HepG2 (cell line): ENCODE measurements at regions of chr12 and their contacts with region 1.

Region 1: GRCh38 chr12:112012775-112013600 is at the starts of genes ERP29 and TMEM116:
- DNase-seq: peak; percentile 95
- ATAC-seq: peak; percentile 76
- H3K4me3 ChIP-seq: peak within 1 kb of the TSS; percentile 62 to 86 (median 72)
- H3K27ac ChIP-seq: peak within 1 kb of the TSS; percentile 91
- H3K4me1 ChIP-seq: peaks cover 55% of the 10 kb centered on the region
- H3K27me3 ChIP-seq: no peaks in the 10 kb centered on the region; a peak in 1 of 5 replicates
- CTCF ChIP-seq: peak; percentile 51; the same call in 1 of the 2 replicates
- EP300 ChIP-seq: no peak
- POLR2A ChIP-seq: peak; percentile 96 to 97
- RAD21 ChIP-seq: peak; percentile 42
- total RNA-seq, gene ERP29: 67.6 and 147 TPM in 2 replicates
- total RNA-seq, gene TMEM116: 11.5 and 14.0 TPM in 2 replicates

Region 2: DNA sequence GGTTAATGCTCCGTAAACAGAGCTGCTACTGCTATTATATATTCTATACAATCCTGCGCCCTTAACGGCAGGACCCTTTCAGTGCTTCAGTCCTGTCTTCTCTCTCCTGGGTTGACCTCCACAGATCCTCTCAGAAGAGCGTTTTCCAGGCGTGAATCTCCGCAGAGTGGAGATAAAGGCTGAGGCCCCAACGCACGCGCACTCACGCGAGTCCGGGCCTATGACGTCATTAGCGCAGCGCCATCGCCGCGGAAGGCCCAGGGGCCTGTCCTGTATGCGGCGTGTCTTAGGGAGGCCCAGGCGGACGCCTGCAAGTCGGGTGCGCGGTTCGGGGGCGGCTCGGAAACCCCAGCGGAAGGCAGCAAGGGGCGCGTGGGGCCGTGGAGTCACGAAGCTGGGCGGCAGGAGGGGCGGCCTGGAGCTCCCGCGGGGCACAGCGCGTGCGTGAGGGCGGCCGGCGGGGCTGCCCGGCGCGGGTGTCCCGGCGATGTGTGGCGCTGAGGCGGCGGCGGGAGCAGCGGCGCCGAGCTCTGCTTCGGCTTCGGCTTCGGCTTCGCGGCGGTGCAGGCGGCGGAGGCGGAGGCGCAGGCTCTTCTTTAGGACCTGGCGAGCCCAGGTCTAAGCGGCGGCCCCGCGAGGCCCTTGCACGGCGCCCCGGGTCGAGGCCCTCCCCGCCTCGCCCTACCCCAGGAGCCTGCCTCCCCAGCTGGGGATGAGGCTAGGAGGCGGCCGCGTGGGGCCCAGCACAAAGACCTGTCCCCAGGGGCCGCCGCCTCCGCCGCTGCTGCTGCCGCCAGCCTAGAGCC is 171.0 kb before region 1 on chr12 and contains the start of gene MAPKAPK5:
- CTCF ChIA-PET with region 1: no interaction called
- POLR2A ChIA-PET with region 1: interaction called, 8 read pairs
- in situ Hi-C with region 1: no loop called
- intact Hi-C with region 1: loop called (anchors 10 kb)
- DNase-seq: peak; percentile 88
- ATAC-seq: peak; percentile 84
- H3K4me3 ChIP-seq: peak within 1 kb of the TSS; percentile 77 to 97 (median 87)
- H3K27ac ChIP-seq: peak within 1 kb of the TSS; percentile 87
- H3K4me1 ChIP-seq: peaks cover 41% of the 10 kb centered on the region
- H3K27me3 ChIP-seq: no peaks in the 10 kb centered on the region; a peak in 1 of 5 replicates
- CTCF ChIP-seq: peak; percentile 22; the same call in 1 of the 2 replicates
- EP300 ChIP-seq: 0 out of 4 replicates have a peak, but pooled peaks of 1 of the 2 experiments have one; percentile 12
- POLR2A ChIP-seq: peak; percentile 81 to 91
- RAD21 ChIP-seq: peak; percentile 7; the same call in 1 of the 2 replicates
- total RNA-seq, gene MAPKAPK5: 47.5 and 58.2 TPM in 2 replicates

Region 3: DNA sequence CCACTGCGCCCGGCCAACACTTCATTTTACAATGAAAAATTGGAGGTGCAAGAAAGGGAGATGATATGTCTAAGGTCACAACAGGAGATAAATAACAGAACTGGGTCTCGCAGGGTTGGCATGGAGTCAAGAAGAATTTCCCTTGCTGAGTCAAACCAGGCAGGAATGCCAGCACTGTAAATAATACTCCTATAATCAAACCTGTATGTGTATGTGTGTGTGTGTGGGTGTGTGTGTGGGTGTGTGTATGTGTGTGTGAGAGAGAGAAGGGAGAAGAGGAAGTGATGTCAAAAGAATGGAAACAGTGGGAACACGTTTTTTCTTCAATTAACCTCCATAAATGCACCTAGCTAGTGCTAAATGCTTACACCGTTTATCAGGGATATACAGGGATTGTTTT is 70.4 kb before region 1 on chr12:
- CTCF ChIA-PET with region 1: no interaction called
- POLR2A ChIA-PET with region 1: interaction called, 13 read pairs
- in situ Hi-C with region 1: loop called (anchors 10 kb)
- intact Hi-C with region 1: loop called (anchors 2 kb)
- DNase-seq: no peak
- ATAC-seq: no peak
- H3K4me3 ChIP-seq: no peak overlapping the region
- H3K27ac ChIP-seq: no peak overlapping the region
- H3K4me1 ChIP-seq: peaks cover 22% of the 10 kb centered on the region
- H3K27me3 ChIP-seq: no peaks in the 10 kb centered on the region
- CTCF ChIP-seq: no peak
- EP300 ChIP-seq: no peak
- POLR2A ChIP-seq: no peak
- RAD21 ChIP-seq: no peak

Region 4: DNA sequence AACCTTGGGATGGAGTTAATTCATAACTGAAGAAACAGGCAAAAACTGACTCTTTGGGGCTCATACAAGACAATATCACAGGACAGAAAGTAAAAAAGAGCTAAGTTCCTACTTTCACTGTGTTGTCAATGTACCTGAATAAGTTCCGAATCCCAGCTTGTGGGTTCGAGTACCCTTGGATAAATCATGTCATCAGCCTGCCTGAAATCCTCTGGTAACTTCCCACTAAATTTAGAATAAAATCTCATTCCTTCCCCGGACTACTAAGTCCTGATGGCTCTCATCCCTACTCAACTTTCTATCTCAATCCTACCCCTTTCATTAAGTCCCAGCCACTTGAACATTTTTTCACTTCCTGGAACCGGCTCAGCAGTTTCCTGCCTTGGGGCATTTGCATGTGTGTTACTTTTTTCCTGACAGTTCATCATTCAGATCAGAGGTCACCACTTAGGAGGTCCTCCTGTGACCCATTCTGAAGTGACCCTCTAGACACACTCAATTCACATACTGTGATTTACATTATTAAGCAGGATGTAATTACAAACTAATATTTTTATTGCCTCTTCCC is 12.9 kb after region 1 on chr12:
- CTCF ChIA-PET with region 1: no interaction called
- POLR2A ChIA-PET with region 1: interaction called, 62 read pairs
- in situ Hi-C with region 1: no loop called
- intact Hi-C with region 1: no loop called
- DNase-seq: no peak
- ATAC-seq: peak; percentile 17; the same call in 1 of the 3 replicates
- H3K4me3 ChIP-seq: no peak overlapping the region
- H3K27ac ChIP-seq: no peak overlapping the region
- H3K4me1 ChIP-seq: no peaks in the 10 kb centered on the region
- H3K27me3 ChIP-seq: no peaks in the 10 kb centered on the region
- CTCF ChIP-seq: no peak
- EP300 ChIP-seq: no peak
- POLR2A ChIP-seq: no peak
- RAD21 ChIP-seq: no peak

Region 5: GRCh38 chr12:112097641-112098040 is 84.7 kb after region 1 on chr12:
- CTCF ChIA-PET with region 1: no interaction called
- POLR2A ChIA-PET with region 1: no interaction called
- in situ Hi-C with region 1: no loop called
- intact Hi-C with region 1: no loop called
- DNase-seq: no peak
- ATAC-seq: no peak
- H3K4me3 ChIP-seq: no peak overlapping the region
- H3K27ac ChIP-seq: no peak overlapping the region
- H3K4me1 ChIP-seq: no peaks in the 10 kb centered on the region
- H3K27me3 ChIP-seq: no peaks in the 10 kb centered on the region
- CTCF ChIP-seq: no peak
- EP300 ChIP-seq: no peak
- POLR2A ChIP-seq: no peak
- RAD21 ChIP-seq: no peak

Region 6: GRCh38 chr12:112108201-112109079 is 95.5 kb after region 1 on chr12 and contains the start of gene NAA25:
- CTCF ChIA-PET with region 1: no interaction called
- POLR2A ChIA-PET with region 1: interaction called, 10 read pairs
- in situ Hi-C with region 1: no loop called
- intact Hi-C with region 1: no loop called
- DNase-seq: peak; percentile 75
- ATAC-seq: peak; percentile 72
- H3K4me3 ChIP-seq: peak within 1 kb of the TSS; percentile 63 to 91 (median 90)
- H3K27ac ChIP-seq: peak within 1 kb of the TSS; percentile 93
- H3K4me1 ChIP-seq: peaks cover 66% of the 10 kb centered on the region
- H3K27me3 ChIP-seq: no peaks in the 10 kb centered on the region; a peak in 1 of 5 replicates
- CTCF ChIP-seq: no peak
- EP300 ChIP-seq: no peak
- POLR2A ChIP-seq: peak; percentile 51 to 72; a peak in 3 of 4 replicates
- RAD21 ChIP-seq: no peak
- total RNA-seq, gene NAA25: 32.0 and 36.1 TPM in 2 replicates

Region 7: GRCh38 chr12:112125250-112125999 is 112.4 kb after region 1 on chr12 and contains the start of gene TRAFD1:
- CTCF ChIA-PET with region 1: no interaction called
- POLR2A ChIA-PET with region 1: interaction called, 10 read pairs
- in situ Hi-C with region 1: no loop called
- intact Hi-C with region 1: no loop called
- DNase-seq: peak; percentile 94
- ATAC-seq: peak; percentile 99
- H3K4me3 ChIP-seq: peak within 1 kb of the TSS; percentile 79 to 93 (median 81)
- H3K27ac ChIP-seq: peak within 1 kb of the TSS; percentile 61
- H3K4me1 ChIP-seq: peaks cover 54% of the 10 kb centered on the region
- H3K27me3 ChIP-seq: no peaks in the 10 kb centered on the region
- CTCF ChIP-seq: 0 out of 2 replicates have a peak, but pooled peaks have one; percentile 19
- EP300 ChIP-seq: no peak
- POLR2A ChIP-seq: peak; percentile 92 to 99
- RAD21 ChIP-seq: 0 out of 2 replicates have a peak, but pooled peaks have one; percentile 36
- total RNA-seq, gene TRAFD1: 20.9 and 27.8 TPM in 2 replicates

Region 8: GRCh38 chr12:112214064-112214463 is 201.1 kb after region 1 on chr12:
- CTCF ChIA-PET with region 1: no interaction called
- POLR2A ChIA-PET with region 1: no interaction called
- in situ Hi-C with region 1: no loop called
- intact Hi-C with region 1: no loop called
- DNase-seq: no peak
- ATAC-seq: no peak
- H3K4me3 ChIP-seq: no peak overlapping the region
- H3K27ac ChIP-seq: no peak overlapping the region
- H3K4me1 ChIP-seq: no peaks in the 10 kb centered on the region
- H3K27me3 ChIP-seq: no peaks in the 10 kb centered on the region
- CTCF ChIP-seq: no peak
- EP300 ChIP-seq: no peak
- POLR2A ChIP-seq: no peak
- RAD21 ChIP-seq: no peak